AG04449 (cell line): ENCODE measurements at regions of chr1 and their contacts with region 1.

Region 1: DNA sequence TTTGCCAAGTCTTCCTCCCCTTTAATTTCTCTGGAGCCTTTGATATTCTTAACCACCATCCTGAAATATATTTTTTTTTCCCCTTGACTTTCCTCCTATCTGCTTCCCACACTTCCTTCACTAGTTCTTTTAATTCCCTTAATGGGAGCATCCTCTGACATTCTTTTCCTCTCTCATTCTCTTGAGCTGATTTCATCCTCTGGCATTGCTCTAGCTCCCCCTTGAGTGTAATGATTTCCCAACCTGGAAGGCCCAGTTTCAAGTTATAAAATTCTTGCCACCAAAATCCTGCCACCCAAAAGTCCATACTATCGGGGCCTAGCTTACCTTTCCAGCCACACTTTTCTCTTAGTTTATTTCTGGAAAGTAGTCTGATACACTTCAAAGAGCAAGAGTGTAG is 39.5 kb upstream of the UBE2U start:
- DNase-seq: no peak
- H3K4me3 ChIP-seq: no peak overlapping the region
- CTCF ChIP-seq: peak; percentile 58

Region 2: GRCh38 chr1:64147759-64148158 is 16.2 kb before region 1 on chr1:
- CTCF ChIA-PET with region 1: interaction called, 13 read pairs
- POLR2A ChIA-PET with region 1: no interaction called
- DNase-seq: no peak
- H3K4me3 ChIP-seq: no peak overlapping the region
- CTCF ChIP-seq: no peak